Gastrocnemius medialis (tissue), 4 donors: ENCODE measurements at regions of chr10 and their contacts with region 1.

Region 1: GRCh38 chr10:77641788-77642397 is 4.3 kb upstream of the KCNMA1 start:
- DNase-seq: peak in 1 of 2 donors; percentile 49
- ATAC-seq: peak; percentile 21 to 31
- H3K4me3 ChIP-seq: no peak overlapping the region
- H3K27ac ChIP-seq: peak overlapping the region in 1 of 4 donors; percentile 13
- H3K4me1 ChIP-seq: peaks cover 3 to 6% of the 10 kb centered on the region in 2 donors
- H3K27me3 ChIP-seq: peaks cover 0 to 3% (median 0%) of the 10 kb centered on the region in 3 donors
- CTCF ChIP-seq: peak; percentile 83 to 95 (median 90)
- POLR2A ChIP-seq: no peak

Region 2: GRCh38 chr10:77165445-77166208 is 476.3 kb before region 1 on chr10:
- in situ Hi-C with region 1: loop called (anchors 5 to 10 kb)
- intact Hi-C with region 1: loop called (anchors 2 kb)
- DNase-seq: peak; percentile 28 to 29
- ATAC-seq: peak; percentile 27 to 70
- H3K4me3 ChIP-seq: peak overlapping the region in 1 of 4 donors; percentile 22
- H3K27ac ChIP-seq: no peak overlapping the region
- H3K4me1 ChIP-seq: peaks cover 0 to 46% of the 10 kb centered on the region in 2 donors
- H3K27me3 ChIP-seq: no peaks in the 10 kb centered on the region
- CTCF ChIP-seq: peak; percentile 66 to 78 (median 74)
- POLR2A ChIP-seq: no peak

Region 3: DNA sequence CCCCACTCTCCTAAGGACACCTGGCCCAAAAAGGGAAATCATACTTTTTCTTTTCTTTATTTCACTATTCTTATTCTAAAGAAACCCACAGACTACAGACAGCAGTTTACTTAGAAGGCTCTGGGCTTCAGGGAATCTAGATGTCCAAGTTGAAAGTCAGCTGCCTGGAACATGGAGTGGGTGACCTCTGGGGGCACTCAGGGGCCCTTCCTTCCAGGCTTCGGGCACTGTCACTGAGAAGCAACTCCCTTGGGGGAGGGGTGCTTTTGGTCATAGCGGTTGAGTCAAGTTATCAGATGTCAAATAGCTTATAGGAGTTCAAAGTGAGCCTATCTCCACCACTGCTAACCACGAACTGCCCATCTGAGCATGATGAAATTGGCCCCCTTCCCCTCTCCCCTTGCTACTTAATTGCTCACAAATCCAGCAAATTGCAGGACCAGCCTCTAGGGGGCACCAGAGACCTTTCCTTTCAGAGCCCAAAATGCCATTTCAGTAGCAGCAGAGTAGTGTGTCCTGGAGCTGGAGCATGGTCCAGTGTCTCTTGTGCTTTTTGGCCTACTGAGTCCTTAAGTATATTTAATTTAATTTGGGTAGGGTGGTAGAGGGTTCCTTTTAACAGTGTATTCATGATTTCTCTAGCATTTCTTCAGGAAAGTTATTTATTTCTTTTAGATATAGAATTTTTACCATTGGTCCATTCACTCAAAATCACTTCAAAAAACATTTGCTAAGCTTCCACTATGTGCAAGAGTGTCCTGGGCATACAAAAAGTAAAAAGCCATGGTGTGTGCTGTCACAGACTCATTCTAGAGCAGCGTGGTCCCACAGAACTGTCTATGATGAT is 468.1 kb before region 1 on chr10:
- in situ Hi-C with region 1: loop called (anchors 5 to 10 kb)
- intact Hi-C with region 1: loop called (anchors 2 kb)
- DNase-seq: peak; percentile 42 to 73
- ATAC-seq: peak; percentile 66 to 90
- H3K4me3 ChIP-seq: no peak overlapping the region
- H3K27ac ChIP-seq: no peak overlapping the region
- H3K4me1 ChIP-seq: peaks cover 6 to 8% of the 10 kb centered on the region in 2 donors
- H3K27me3 ChIP-seq: no peaks in the 10 kb centered on the region
- CTCF ChIP-seq: peak; percentile 88 to 94 (median 89)
- POLR2A ChIP-seq: no peak

Region 4: GRCh38 chr10:77391605-77392235 is 250.2 kb before region 1 on chr10:
- in situ Hi-C with region 1: loop called in 3 of 4 experiments (anchors 5 to 10 kb)
- intact Hi-C with region 1: loop called (anchors 1 kb)
- DNase-seq: peak; percentile 55 to 70
- ATAC-seq: peak; percentile 64 to 79
- H3K4me3 ChIP-seq: no peak overlapping the region
- H3K27ac ChIP-seq: peak overlapping the region; percentile 49 to 72 (median 65)
- H3K4me1 ChIP-seq: peaks cover 67 to 68% of the 10 kb centered on the region in 2 donors
- H3K27me3 ChIP-seq: no peaks in the 10 kb centered on the region
- CTCF ChIP-seq: peak; percentile 63 to 72 (median 70)
- POLR2A ChIP-seq: no peak

Region 5: DNA sequence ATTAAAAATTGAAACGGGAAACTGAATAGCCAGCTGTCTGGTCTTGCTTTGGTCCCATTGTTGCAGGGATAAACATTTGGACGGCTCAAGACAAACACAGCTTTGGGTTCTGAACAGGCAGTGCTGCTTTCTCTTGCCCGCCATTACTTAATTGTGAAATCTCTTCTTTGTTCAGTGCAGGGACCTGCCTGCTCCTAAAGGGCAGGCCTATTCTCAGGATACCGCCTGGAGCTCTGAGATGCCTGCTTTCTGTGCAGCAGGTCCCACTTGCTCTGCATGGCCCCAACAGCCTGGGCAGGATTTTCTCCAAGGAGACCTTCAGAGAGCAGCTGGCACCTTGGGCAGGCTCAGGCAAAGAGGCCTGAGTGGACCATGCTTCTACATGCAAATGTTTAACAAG is 241.9 kb before region 1 on chr10:
- in situ Hi-C with region 1: loop called in 2 of 4 experiments (anchors 5 kb)
- intact Hi-C with region 1: no loop called
- DNase-seq: no peak
- ATAC-seq: peak; percentile 15 to 17
- H3K4me3 ChIP-seq: no peak overlapping the region
- H3K27ac ChIP-seq: peak overlapping the region; percentile 68 to 80 (median 69)
- H3K4me1 ChIP-seq: peaks cover 50 to 53% of the 10 kb centered on the region in 2 donors
- H3K27me3 ChIP-seq: no peaks in the 10 kb centered on the region
- CTCF ChIP-seq: no peak
- POLR2A ChIP-seq: no peak

Region 6: DNA sequence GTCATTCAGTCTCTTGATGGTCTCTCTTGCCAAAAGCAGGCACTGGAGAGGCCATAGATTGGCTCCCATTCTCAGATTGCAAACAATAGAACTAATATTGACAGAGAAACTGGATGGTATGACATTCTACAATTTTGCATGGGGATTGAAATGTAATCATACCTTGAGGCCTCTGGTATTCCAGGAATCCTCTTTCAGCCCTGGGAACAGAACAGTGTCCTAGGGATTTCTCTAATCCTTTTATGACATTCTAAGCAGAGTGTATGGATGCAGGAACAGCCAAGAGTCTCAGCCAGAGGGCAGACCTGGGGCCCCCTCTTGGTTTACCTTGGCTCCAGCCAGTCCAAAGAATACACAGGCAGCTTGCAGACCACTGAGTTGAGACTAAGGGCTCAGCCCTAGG is 210.7 kb before region 1 on chr10:
- in situ Hi-C with region 1: no loop called
- intact Hi-C with region 1: loop called (anchors 2 kb)
- DNase-seq: no peak
- ATAC-seq: no peak
- H3K4me3 ChIP-seq: no peak overlapping the region
- H3K27ac ChIP-seq: no peak overlapping the region
- H3K4me1 ChIP-seq: peaks cover 7 to 16% of the 10 kb centered on the region in 2 donors
- H3K27me3 ChIP-seq: no peaks in the 10 kb centered on the region
- CTCF ChIP-seq: no peak
- POLR2A ChIP-seq: no peak

Region 7: GRCh38 chr10:77548151-77548550 is 93.7 kb before region 1 on chr10:
- in situ Hi-C with region 1: no loop called
- intact Hi-C with region 1: loop called (anchors 5 kb)
- DNase-seq: peak; percentile 96 to 99
- ATAC-seq: peak; percentile 87 to 89
- H3K4me3 ChIP-seq: no peak overlapping the region
- H3K27ac ChIP-seq: peak overlapping the region; percentile 79 to 93 (median 88)
- H3K4me1 ChIP-seq: peaks cover 56 to 57% of the 10 kb centered on the region in 2 donors
- H3K27me3 ChIP-seq: no peaks in the 10 kb centered on the region
- CTCF ChIP-seq: no peak
- POLR2A ChIP-seq: peak in 1 of 2 donors; percentile 42